Left cardiac atrium (tissue), 4 donors: ENCODE measurements at regions of chr12 and their contacts with region 1.

Region 1: GRCh38 chr12:127677537-127678131 is 589.3 kb upstream of the TMEM132C start:
- DNase-seq: peak; percentile 74
- ATAC-seq: peak; percentile 61 to 87

Region 2: GRCh38 chr12:127925971-127926370 is 248.3 kb after region 1 on chr12:
- intact Hi-C with region 1: loop called in 1 of 2 experiments (anchors 5 kb)
- DNase-seq: peak; percentile 51
- ATAC-seq: peak; percentile 84 to 91

Region 3: GRCh38 chr12:128076188-128076587 is 398.6 kb after region 1 on chr12:
- intact Hi-C with region 1: loop called in 1 of 2 experiments (anchors 10 kb)
- DNase-seq: no peak
- ATAC-seq: no peak